CD8-positive, alpha-beta T cell (primary cell): ENCODE measurements at regions of chr14 and their contacts with region 1.

Region 1: DNA sequence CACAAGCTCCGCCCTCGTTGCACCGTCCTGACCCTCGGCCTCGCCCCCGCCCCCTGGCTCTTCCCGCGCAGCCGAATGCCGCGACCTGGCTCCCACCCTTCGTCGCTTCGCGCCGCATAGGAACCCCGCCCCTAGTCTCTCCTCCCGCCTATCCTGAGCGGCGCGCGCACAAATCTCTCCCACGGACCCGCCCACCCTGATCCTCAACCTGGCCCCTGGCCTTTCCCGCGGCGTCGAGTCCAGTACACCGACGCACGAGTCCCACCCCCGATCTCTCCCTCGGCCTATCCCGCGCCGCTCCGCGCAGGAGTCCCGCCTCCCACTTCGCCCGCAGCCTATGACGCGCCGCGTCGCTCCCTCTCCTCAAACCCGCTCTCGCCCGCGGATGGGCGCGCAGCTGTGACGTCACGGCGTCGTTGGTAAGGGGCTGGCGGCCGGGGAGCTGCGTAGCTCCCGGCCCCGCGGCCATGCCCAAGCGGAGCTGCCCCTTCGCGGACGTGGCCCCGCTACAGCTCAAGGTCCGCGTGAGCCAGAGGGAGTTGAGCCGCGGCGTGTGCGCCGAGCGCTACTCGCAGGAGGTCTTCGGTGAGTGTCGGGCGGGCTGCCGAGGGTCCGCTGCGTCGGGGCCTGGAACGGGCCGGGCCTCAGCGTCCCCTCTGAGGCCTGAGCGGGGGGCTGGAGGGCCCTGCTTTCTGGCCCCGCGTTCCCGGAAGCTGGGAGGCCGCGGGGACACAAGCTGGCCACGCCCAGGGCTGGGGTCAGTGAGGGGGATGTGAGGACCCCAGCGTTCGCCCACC is at the start of gene SIVA1:
- DNase-seq: peak; percentile 98 to 100 (median 99)
- ATAC-seq: peak; percentile 88
- H3K4me3 ChIP-seq: peak within 1 kb of the TSS; percentile 87 to 99
- H3K4me3 Mint-ChIP-seq: peak within 1 kb of the TSS; percentile 87
- H3K27ac ChIP-seq: peak within 1 kb of the TSS; percentile 86 to 97
- H3K27ac Mint-ChIP-seq: peak within 1 kb of the TSS; percentile 94
- H3K4me1 ChIP-seq: peaks cover 50% of the 10 kb centered on the region
- H3K4me1 Mint-ChIP-seq: peaks cover 48% of the 10 kb centered on the region
- H3K27me3 ChIP-seq: no peaks in the 10 kb centered on the region
- H3K27me3 Mint-ChIP-seq: no peaks in the 10 kb centered on the region
- CTCF ChIP-seq: no peak
- total RNA-seq, gene SIVA1: 104 to 115 TPM

Region 2: DNA sequence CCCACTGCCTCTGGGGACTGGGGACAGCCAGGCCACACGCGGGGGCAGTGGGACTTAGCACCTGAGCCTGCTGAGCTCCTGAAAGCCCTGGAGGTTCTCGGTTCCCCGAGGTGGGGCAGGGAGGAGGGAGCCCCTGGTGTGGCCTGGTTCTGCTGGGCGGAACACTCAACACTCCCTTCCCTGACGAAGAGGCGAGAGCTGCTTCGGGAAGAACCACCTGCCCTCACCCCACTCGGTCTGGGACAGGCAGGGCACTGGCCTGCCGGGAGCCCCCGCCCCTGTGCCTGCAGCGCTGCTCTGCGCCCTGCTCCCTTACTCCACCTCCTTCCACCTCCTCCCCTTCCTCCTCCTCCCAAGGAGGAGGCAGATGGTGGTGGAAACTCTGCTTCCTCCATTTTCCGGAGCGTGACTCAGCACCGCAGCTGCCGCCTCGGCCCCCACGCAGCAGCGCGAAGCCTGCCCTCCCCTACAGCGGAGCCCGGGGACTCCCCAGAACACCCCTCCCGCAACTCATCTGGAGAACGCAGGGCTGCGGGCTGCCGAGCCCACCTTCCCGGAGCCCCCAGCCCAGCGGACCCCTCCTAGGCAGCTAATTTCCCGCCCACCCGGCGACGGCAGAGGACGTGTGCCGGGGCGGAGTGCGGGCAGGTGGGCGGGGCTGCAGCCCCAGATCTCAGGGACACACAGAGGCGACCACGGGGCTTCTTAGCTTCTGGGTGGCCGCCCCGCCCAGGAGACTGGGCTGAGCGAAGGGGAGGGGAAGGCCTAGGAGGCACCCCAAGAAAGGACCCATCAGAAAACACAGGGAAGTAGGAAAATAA is 75.2 kb before region 1 on chr14:
- CTCF ChIA-PET with region 1: no interaction called
- POLR2A ChIA-PET with region 1: no interaction called
- intact Hi-C with region 1: no loop called
- DNase-seq: peak in 8 of 9 experiments; percentile 42 to 80 (median 64)
- ATAC-seq: peak; percentile 83
- H3K4me3 ChIP-seq: peak overlapping the region; percentile 63 to 73
- H3K4me3 Mint-ChIP-seq: peak overlapping the region; percentile 81
- H3K27ac ChIP-seq: no peak overlapping the region
- H3K27ac Mint-ChIP-seq: peak overlapping the region; percentile 67
- H3K4me1 ChIP-seq: peaks cover 17% of the 10 kb centered on the region
- H3K4me1 Mint-ChIP-seq: peaks cover 15% of the 10 kb centered on the region
- H3K27me3 ChIP-seq: peaks cover 0 to 9% of the 10 kb centered on the region in 2 experiments
- H3K27me3 Mint-ChIP-seq: no peaks in the 10 kb centered on the region
- CTCF ChIP-seq: no peak

Region 3: DNA sequence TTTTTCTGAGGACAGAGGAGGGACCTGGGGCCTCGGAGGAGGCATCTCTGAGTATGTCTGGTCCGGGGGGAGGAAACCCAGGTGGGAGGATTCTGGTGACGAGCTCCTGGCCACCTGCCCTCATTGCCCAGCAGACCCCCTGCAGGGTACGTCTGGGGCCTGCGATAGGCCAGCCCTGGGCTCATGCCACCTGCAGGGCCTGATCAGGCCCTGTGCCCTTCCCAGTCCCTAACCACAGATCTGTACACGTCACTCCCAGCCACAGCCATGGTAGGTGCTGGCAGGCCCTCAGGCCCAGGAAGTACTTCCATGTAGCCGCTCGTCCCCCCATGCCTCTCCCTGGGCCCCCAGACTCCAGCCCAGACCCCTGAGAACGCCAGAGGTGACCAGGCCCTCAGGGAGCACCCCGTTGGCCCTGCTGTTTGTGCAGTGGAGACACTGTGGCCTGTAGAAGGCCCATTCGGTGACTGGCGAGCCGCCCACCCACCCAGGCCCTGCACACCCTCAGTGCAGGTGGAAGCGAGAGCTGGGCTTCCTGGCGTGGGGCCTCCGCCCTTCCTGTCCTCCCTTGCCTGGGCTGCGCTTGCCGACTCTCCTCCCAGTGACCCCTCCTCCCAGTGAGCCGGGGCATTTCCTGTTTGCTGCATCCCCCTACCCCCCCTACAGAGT is 57.8 kb before region 1 on chr14:
- CTCF ChIA-PET with region 1: no interaction called
- POLR2A ChIA-PET with region 1: interaction called, 3 read pairs
- intact Hi-C with region 1: loop called in 1 of 2 experiments (anchors 1 kb)
- DNase-seq: peak in 7 of 9 experiments; percentile 34 to 82 (median 56)
- ATAC-seq: peak; percentile 75
- H3K4me3 ChIP-seq: peak overlapping the region; percentile 7 to 17
- H3K4me3 Mint-ChIP-seq: peak overlapping the region; percentile 71
- H3K27ac ChIP-seq: peak overlapping the region; percentile 61 to 78
- H3K27ac Mint-ChIP-seq: peak overlapping the region; percentile 94
- H3K4me1 ChIP-seq: peaks cover 61% of the 10 kb centered on the region
- H3K4me1 Mint-ChIP-seq: peaks cover 45% of the 10 kb centered on the region
- H3K27me3 ChIP-seq: no peaks in the 10 kb centered on the region
- H3K27me3 Mint-ChIP-seq: no peaks in the 10 kb centered on the region
- CTCF ChIP-seq: no peak

Region 4: GRCh38 chr14:104768437-104769323 is 15.7 kb after region 1 on chr14:
- CTCF ChIA-PET with region 1: interaction called, 42 read pairs
- POLR2A ChIA-PET with region 1: interaction called, 7 read pairs
- intact Hi-C with region 1: loop called (anchors 1 kb)
- DNase-seq: peak; percentile 80 to 97 (median 89)
- ATAC-seq: peak; percentile 97
- H3K4me3 ChIP-seq: no peak overlapping the region
- H3K4me3 Mint-ChIP-seq: no peak overlapping the region
- H3K27ac ChIP-seq: no peak overlapping the region
- H3K27ac Mint-ChIP-seq: no peak overlapping the region
- H3K4me1 ChIP-seq: peaks cover 5% of the 10 kb centered on the region
- H3K4me1 Mint-ChIP-seq: peaks cover 4% of the 10 kb centered on the region
- H3K27me3 ChIP-seq: no peaks in the 10 kb centered on the region
- H3K27me3 Mint-ChIP-seq: no peaks in the 10 kb centered on the region
- CTCF ChIP-seq: peak; percentile 89

Region 5: GRCh38 chr14:104826189-104826860 is 73.4 kb after region 1 on chr14:
- CTCF ChIA-PET with region 1: interaction called, 12 read pairs
- POLR2A ChIA-PET with region 1: interaction called, 11 read pairs
- intact Hi-C with region 1: loop called (anchors 1 kb)
- DNase-seq: peak; percentile 88 to 98 (median 95)
- ATAC-seq: peak; percentile 91
- H3K4me3 ChIP-seq: peak overlapping the region; percentile 66 to 67
- H3K4me3 Mint-ChIP-seq: peak overlapping the region; percentile 80
- H3K27ac ChIP-seq: no peak overlapping the region
- H3K27ac Mint-ChIP-seq: no peak overlapping the region
- H3K4me1 ChIP-seq: peaks cover 20% of the 10 kb centered on the region
- H3K4me1 Mint-ChIP-seq: peaks cover 25% of the 10 kb centered on the region
- H3K27me3 ChIP-seq: peaks cover 0 to 5% of the 10 kb centered on the region in 2 experiments
- H3K27me3 Mint-ChIP-seq: no peaks in the 10 kb centered on the region
- CTCF ChIP-seq: peak; percentile 79

Region 6: DNA sequence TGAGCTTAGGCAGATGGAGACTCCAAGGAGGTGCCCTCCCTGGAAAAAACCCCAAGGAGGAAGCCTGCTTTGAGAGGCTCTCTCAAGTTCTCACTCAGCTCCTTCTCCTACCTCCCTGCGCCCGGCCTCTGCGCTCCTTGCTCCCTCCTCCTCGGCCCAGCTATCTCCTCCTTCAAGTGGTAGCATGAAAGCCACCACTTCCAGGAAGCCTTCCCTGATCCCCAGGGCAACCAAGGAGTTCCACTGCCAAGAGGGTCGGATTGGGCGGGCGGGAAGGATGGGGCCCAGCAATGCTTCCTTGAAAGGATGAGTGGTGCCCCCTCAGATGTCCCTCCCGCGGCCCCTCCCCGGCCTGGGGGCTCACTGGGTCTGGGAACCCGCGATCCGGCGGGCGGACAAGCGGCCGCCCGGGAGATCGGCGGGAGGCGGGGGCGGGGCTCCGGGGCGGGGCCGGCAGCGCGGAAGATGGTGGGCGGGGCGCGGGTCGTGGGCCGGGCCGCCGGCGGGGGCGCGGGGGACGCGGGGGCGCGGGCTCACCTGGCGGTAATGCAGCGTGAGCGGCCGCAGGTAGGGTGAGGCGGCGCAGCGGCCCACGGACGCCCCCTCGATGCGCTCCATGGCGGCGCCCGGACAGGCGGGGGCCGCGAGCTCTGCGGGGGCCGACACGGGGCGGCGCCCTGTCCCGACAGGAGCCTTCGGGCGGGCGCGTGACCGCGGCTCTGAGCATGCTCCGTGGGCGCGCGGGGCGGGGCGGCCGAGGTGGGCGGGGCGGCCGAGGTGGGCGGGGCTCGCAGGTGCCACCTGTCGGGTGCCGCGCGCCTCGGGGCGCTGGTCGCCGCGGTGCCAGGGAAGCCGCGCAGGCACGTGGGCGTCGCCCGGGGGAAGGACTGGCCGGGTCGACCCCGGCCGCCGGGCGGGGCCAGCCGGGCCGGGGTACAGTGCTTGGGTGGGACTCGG is 427.9 kb after region 1 on chr14 and contains the start of gene NUDT14:
- CTCF ChIA-PET with region 1: no interaction called
- POLR2A ChIA-PET with region 1: no interaction called
- intact Hi-C with region 1: loop called in 1 of 2 experiments (anchors 5 kb)
- DNase-seq: peak; percentile 77 to 95 (median 86)
- ATAC-seq: peak; percentile 94
- H3K4me3 ChIP-seq: peak within 1 kb of the TSS; percentile 36 to 37
- H3K4me3 Mint-ChIP-seq: peak within 1 kb of the TSS; percentile 76
- H3K27ac ChIP-seq: no peak within 1 kb of the TSS
- H3K27ac Mint-ChIP-seq: no peak within 1 kb of the TSS
- H3K4me1 ChIP-seq: peaks cover 25% of the 10 kb centered on the region
- H3K4me1 Mint-ChIP-seq: peaks cover 16% of the 10 kb centered on the region
- H3K27me3 ChIP-seq: no peaks in the 10 kb centered on the region
- H3K27me3 Mint-ChIP-seq: no peaks in the 10 kb centered on the region
- CTCF ChIP-seq: no peak
- total RNA-seq, gene NUDT14: 5.7 to 6.2 TPM